BJ (cell line): ENCODE measurements at regions of chr19 and their contacts with region 1.

Region 1: DNA sequence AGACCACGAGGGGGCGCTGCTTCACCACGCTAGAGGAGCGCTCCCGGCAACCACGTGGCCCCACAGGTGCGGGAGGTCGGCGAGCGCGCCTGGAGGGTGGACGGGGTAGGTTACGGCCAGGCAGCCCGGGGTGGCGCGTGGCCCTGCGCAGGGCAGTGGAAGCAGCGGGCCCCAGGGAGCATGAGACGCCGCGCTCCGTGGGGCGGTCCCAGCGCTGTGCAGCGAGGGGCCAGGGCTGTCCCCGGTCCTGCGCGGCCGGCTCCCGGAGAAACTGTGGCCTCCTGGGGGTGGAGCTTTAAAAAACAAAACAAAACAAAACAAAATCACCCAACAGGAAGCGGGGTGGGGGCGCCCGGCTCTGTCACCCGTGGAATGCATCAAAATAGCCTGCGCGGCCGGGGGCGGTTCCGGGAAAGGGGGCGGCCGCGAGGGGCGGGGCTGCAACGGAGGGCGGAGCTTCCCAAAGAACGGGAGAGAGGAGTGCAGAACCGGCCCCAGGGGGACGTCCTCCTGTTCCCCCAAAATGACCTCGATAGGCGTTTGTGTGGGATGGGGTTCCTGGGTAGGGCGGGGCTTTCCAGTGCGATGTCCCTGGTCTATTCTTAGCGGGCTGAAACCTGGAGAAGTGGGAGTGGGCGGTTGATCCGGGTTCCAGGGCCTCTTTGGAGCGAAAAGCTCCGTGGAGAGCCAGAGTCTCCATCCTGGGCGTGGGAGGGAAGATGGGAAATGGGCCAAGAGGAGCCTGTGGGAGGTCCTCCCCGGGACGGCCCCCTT is 27.3 kb downstream of the NUMBL start:
- DNase-seq: no peak
- H3K4me3 ChIP-seq: peak overlapping the region; percentile 52
- H3K27me3 ChIP-seq: no peaks in the 10 kb centered on the region
- CTCF ChIP-seq: peak; percentile 91

Region 2: GRCh38 chr19:40650749-40651305 is 12.3 kb before region 1 on chr19:
- CTCF ChIA-PET with region 1: interaction called, 14 read pairs
- POLR2A ChIA-PET with region 1: no interaction called
- DNase-seq: peak; percentile 90
- H3K4me3 ChIP-seq: no peak overlapping the region
- H3K27me3 ChIP-seq: no peaks in the 10 kb centered on the region
- CTCF ChIP-seq: no peak

Region 3: DNA sequence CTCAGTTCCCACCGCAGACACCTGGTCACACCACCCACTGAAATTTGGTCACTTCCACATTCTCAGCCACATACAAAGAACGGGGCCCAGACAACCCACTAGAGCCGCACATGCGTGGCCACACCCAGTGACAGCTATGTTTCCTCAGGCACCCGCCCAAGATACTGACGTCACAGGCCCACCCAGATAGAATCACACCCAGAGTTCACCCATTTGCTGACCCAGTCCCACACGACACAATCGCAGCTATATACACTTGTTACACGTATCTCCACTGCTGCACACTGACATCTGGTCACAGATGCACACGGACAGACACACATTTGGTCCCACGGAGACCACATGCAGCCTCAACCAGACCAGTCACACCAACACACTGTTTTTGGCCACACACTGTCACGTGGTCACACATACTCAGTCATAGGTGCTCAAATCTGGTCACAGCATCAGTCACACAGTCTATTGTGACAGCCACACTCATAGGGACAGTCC is 24.5 kb after region 1 on chr19:
- CTCF ChIA-PET with region 1: interaction called, 10 read pairs
- POLR2A ChIA-PET with region 1: no interaction called
- DNase-seq: peak; percentile 62
- H3K4me3 ChIP-seq: peak overlapping the region; percentile 3; the same call in 1 of the 2 replicates
- H3K27me3 ChIP-seq: no peaks in the 10 kb centered on the region
- CTCF ChIP-seq: no peak

Region 4: GRCh38 chr19:40806488-40807468 is 143.7 kb after region 1 on chr19:
- CTCF ChIA-PET with region 1: interaction called, 49 read pairs
- POLR2A ChIA-PET with region 1: no interaction called
- DNase-seq: peak; percentile 86
- H3K4me3 ChIP-seq: no peak overlapping the region
- H3K27me3 ChIP-seq: no peaks in the 10 kb centered on the region
- CTCF ChIP-seq: peak; percentile 95

Region 5: DNA sequence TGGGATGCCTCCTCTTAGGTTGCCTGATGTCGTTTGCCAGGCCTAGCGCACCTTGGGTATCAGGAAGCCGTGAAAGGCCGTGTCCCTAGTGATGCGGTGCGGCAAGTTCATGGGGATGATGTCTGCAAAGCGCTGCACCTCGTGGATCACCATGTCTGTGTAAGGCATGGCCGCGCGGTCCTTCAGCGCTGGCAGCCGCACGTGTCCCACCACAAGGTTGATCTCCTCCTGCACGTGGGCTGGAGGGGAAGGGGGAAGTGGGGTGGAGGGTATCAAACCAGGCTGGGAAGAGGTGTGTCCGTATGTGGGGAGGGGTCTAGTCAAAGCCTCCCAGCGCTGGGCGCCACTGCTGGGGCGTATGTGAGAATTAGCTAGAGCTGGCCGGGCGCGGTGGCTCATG is 159.1 kb after region 1 on chr19:
- CTCF ChIA-PET with region 1: interaction called, 36 read pairs
- POLR2A ChIA-PET with region 1: no interaction called
- DNase-seq: no peak
- H3K4me3 ChIP-seq: no peak overlapping the region
- H3K27me3 ChIP-seq: no peaks in the 10 kb centered on the region
- CTCF ChIP-seq: no peak